ENCODE measurements at regions of chr1 and their contacts with region 1.

Region 1: DNA sequence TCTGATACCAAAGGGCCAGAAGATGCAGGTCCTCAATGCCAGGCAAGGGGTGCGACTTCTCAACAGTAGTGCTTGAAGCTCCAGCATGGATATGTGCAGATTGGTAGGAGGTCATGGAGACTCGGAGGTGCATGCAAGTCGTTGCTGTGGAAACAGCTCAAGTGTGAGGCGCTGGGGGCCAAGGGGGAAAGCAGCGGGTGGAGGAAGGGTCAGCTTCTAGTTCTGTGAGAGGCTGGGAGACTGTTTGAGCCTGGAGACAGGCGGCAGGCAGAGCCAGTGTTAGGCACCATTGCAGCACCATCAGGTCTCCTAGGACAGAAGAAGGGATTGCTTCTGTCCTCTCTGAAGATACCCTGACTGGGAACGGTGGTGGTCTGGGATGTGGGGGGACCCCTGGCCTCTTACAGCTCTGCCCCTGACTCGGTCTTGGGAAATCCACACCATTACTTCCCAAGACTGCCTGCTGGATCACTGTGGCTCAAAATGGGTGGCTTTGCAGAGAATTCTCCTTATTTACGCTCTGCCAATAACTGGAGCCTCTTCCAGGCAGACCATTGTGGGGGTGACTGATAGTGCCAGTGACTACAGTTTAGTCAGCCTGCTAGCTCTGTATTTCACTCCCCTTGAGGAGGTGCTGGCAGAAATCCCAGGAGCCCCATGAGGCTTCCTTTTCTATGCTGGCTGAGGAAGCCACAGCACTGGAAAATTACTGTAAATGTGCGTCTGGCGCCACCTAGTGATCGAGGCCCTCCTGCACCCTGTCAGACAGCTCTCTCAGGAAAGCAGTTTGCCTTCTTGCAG is 46.3 kb upstream of the VANGL1 start:
- DNase-seq: peak; percentile 90
- H3K4me3 ChIP-seq: no peak overlapping the region
- H3K27ac ChIP-seq: no peak overlapping the region
- H3K27me3 ChIP-seq: peaks cover 2% of the 10 kb centered on the region
- CTCF ChIP-seq: peak; percentile 98

Region 2: GRCh38 chr1:114979278-114979891 is 616.1 kb before region 1 on chr1:
- CTCF ChIA-PET with region 1: interaction called, 38 read pairs
- POLR2A ChIA-PET with region 1: no interaction called
- DNase-seq: peak; percentile 13
- H3K4me3 ChIP-seq: no peak overlapping the region
- H3K27ac ChIP-seq: no peak overlapping the region
- H3K27me3 ChIP-seq: no peaks in the 10 kb centered on the region
- CTCF ChIP-seq: peak; percentile 77

Region 3: GRCh38 chr1:115133440-115133839 is 462.0 kb before region 1 on chr1:
- CTCF ChIA-PET with region 1: interaction called, 338 read pairs
- POLR2A ChIA-PET with region 1: no interaction called
- DNase-seq: no peak
- H3K4me3 ChIP-seq: no peak overlapping the region
- H3K27ac ChIP-seq: no peak overlapping the region
- H3K27me3 ChIP-seq: no peaks in the 10 kb centered on the region
- CTCF ChIP-seq: no peak

Region 4: GRCh38 chr1:115314766-115315165 is 280.7 kb before region 1 on chr1:
- CTCF ChIA-PET with region 1: interaction called, 17 read pairs
- POLR2A ChIA-PET with region 1: no interaction called
- DNase-seq: peak; percentile 61
- H3K4me3 ChIP-seq: no peak overlapping the region
- H3K27ac ChIP-seq: no peak overlapping the region
- H3K27me3 ChIP-seq: no peaks in the 10 kb centered on the region
- CTCF ChIP-seq: no peak

Region 5: GRCh38 chr1:115476616-115477015 is 118.9 kb before region 1 on chr1:
- CTCF ChIA-PET with region 1: interaction called, 13 read pairs
- POLR2A ChIA-PET with region 1: no interaction called
- DNase-seq: no peak
- H3K4me3 ChIP-seq: no peak overlapping the region
- H3K27ac ChIP-seq: no peak overlapping the region
- H3K27me3 ChIP-seq: peaks cover 6% of the 10 kb centered on the region
- CTCF ChIP-seq: peak; percentile 33

Region 6: GRCh38 chr1:115545791-115546733 is 49.4 kb before region 1 on chr1:
- CTCF ChIA-PET with region 1: interaction called, 12 read pairs
- POLR2A ChIA-PET with region 1: no interaction called
- DNase-seq: peak; percentile 83
- H3K4me3 ChIP-seq: peak overlapping the region; percentile 8; the same call in 1 of the 2 replicates
- H3K27ac ChIP-seq: peak overlapping the region; percentile 99
- H3K27me3 ChIP-seq: no peaks in the 10 kb centered on the region
- CTCF ChIP-seq: peak; percentile 74

Region 7: DNA sequence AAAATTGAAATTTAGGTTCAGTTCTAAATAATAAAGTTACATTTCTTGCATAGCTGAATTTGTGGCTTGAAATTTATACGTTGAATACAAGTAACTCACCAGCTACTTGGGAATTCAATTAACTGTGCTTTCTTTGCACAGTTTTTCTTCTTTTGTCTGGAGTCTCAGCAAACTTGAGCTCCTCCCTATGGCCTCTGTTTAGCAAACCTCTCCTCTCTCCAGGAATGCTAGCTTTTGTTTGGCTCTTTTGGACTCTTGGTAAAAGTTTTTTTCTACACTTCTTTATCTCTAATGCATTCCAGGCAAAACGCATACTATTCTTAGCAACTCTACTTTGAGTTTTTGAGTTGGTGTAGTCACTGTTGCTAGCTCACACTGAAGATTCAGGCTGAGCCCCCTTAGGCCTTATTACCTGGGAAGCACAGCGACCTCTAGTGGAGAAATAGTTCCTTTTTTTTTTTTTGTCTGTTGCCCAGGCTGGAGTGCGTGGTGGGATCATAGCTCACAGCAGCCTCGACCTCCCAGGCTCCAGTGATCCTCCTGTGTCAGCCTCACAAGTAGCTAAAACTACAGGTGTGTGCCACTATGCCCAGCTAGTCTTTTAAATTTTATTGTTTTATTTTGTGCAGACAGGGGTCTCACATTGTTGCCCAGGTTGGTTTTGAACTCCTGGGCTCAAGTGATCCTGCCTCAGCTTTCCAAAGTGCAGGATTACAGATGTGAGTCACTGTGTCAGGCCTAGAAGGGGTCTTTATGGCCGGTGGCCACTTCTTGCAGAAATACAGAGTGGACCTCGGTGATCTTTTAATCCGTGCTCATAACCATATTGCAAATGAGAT is 111.3 kb after region 1 on chr1:
- CTCF ChIA-PET with region 1: interaction called, 31 read pairs
- POLR2A ChIA-PET with region 1: no interaction called
- DNase-seq: peak; percentile 26
- H3K4me3 ChIP-seq: no peak overlapping the region
- H3K27ac ChIP-seq: no peak overlapping the region
- H3K27me3 ChIP-seq: peaks cover 9% of the 10 kb centered on the region
- CTCF ChIP-seq: peak; percentile 74

Region 8: DNA sequence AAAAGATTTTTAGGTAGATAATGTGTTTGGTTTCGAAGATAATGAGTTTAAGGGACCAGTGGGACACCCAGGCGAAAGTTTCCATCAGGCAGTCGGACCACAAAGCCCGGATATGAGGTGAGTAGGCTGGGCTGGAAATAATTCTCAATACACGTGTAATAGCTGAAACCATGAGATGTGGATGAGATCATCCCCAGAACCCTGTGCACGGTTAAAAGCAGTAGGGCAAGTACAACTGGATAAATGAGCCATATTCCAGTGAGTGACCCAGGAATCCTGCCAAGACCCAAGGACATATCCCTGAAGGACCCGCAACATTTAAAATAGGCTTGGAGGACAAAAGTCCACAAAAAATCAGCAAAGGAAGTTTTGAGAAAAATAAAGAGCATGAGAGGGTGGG is 266.9 kb after region 1 on chr1:
- CTCF ChIA-PET with region 1: no interaction called
- POLR2A ChIA-PET with region 1: no interaction called
- DNase-seq: no peak
- H3K4me3 ChIP-seq: no peak overlapping the region
- H3K27ac ChIP-seq: no peak overlapping the region
- H3K27me3 ChIP-seq: no peaks in the 10 kb centered on the region
- CTCF ChIP-seq: no peak